Transverse colon (tissue), 4 donors: ENCODE measurements at regions of chr10 and their contacts with region 1.

Region 1: GRCh38 chr10:104209575-104210198 is 22.5 kb downstream of the CFAP43 start:
- DNase-seq: no peak
- H3K4me3 ChIP-seq: no peak overlapping the region
- H3K27ac ChIP-seq: no peak overlapping the region
- H3K4me1 ChIP-seq: no peaks in the 10 kb centered on the region
- H3K27me3 ChIP-seq: no peaks in the 10 kb centered on the region
- CTCF ChIP-seq: peak; percentile 38 to 53 (median 41)
- EP300 ChIP-seq: no peak
- POLR2A ChIP-seq: no peak

Region 2: GRCh38 chr10:104045151-104046089 is 164.3 kb before region 1 on chr10:
- in situ Hi-C with region 1: loop called in 1 of 4 experiments (anchors 25 kb)
- intact Hi-C with region 1: no loop called
- DNase-seq: no peak
- H3K4me3 ChIP-seq: no peak overlapping the region
- H3K27ac ChIP-seq: no peak overlapping the region
- H3K4me1 ChIP-seq: peaks cover 0 to 15% (median 6%) of the 10 kb centered on the region in 4 donors
- H3K27me3 ChIP-seq: no peaks in the 10 kb centered on the region
- CTCF ChIP-seq: peak; percentile 29 to 45 (median 39)
- EP300 ChIP-seq: no peak
- POLR2A ChIP-seq: no peak

Region 3: GRCh38 chr10:104183682-104184081 is 26.0 kb before region 1 on chr10:
- in situ Hi-C with region 1: no loop called
- intact Hi-C with region 1: no loop called
- DNase-seq: no peak
- H3K4me3 ChIP-seq: no peak overlapping the region
- H3K27ac ChIP-seq: no peak overlapping the region
- H3K4me1 ChIP-seq: no peaks in the 10 kb centered on the region
- H3K27me3 ChIP-seq: no peaks in the 10 kb centered on the region
- CTCF ChIP-seq: no peak
- EP300 ChIP-seq: no peak
- POLR2A ChIP-seq: no peak

Region 4: DNA sequence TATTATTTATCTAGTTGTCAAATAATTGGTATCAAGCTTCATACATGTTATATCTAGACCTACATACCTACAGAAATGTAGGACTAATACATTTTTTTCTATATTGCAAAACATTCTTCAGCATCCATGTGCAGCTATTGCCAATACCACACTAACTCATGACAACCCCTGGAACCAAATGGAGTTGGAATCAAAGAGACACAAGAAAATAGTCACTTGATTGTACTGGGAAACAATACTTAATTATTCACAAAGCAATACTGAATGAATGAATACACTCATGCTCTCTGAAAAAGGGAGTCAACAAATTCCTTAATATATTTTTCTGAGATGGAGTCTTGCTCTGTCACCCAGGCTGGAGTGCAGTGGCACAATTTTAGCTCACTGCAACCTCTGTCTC is 32.9 kb after region 1 on chr10:
- in situ Hi-C with region 1: no loop called
- intact Hi-C with region 1: loop called (anchors 1 kb)
- DNase-seq: no peak
- H3K4me3 ChIP-seq: no peak overlapping the region
- H3K27ac ChIP-seq: no peak overlapping the region
- H3K4me1 ChIP-seq: no peaks in the 10 kb centered on the region
- H3K27me3 ChIP-seq: no peaks in the 10 kb centered on the region
- CTCF ChIP-seq: no peak
- EP300 ChIP-seq: no peak
- POLR2A ChIP-seq: no peak